ENCODE measurements at regions of chr9 and their contacts with region 1.

Region 1: GRCh38 chr9:136539427-136540421 is 6.1 kb downstream of the NOTCH1 start:
- DNase-seq: no peak
- H3K4me3 ChIP-seq: no peak overlapping the region
- H3K27ac ChIP-seq: no peak overlapping the region
- H3K4me1 ChIP-seq: peaks cover 0 to 15% (median 6%) of the 10 kb centered on the region in 4 experiments; a peak in 4 of 7 replicates
- H3K27me3 ChIP-seq: no peaks in the 10 kb centered on the region
- CTCF ChIP-seq: no peak
- EP300 ChIP-seq: no peak
- POLR2A ChIP-seq: no peak
- RAD21 ChIP-seq: no peak

Region 2: GRCh38 chr9:136245219-136246150 is 294.2 kb before region 1 on chr9 and contains the start of gene QSOX2:
- CTCF ChIA-PET with region 1: no interaction called
- POLR2A ChIA-PET with region 1: no interaction called
- DNase-seq: peak; percentile 43 to 85
- H3K4me3 ChIP-seq: peak within 1 kb of the TSS; percentile 81 to 96 (median 87)
- H3K27ac ChIP-seq: 0 out of 2 replicates have a peak within 1 kb of the TSS, but pooled peaks have one; percentile 12
- H3K4me1 ChIP-seq: peaks cover 3 to 21% (median 13%) of the 10 kb centered on the region in 4 experiments
- H3K27me3 ChIP-seq: peaks cover 0 to 7% (median 1%) of the 10 kb centered on the region in 4 experiments; a peak in 4 of 7 replicates
- CTCF ChIP-seq: no peak
- EP300 ChIP-seq: no peak
- POLR2A ChIP-seq: peak in 1 of 2 experiments; percentile 41; a peak in 1 of 3 replicates
- RAD21 ChIP-seq: no peak
- total RNA-seq, gene QSOX2: 27.5 and 28.6 TPM in 2 replicates

Region 3: GRCh38 chr9:136488247-136489214 is 51.2 kb before region 1 on chr9:
- CTCF ChIA-PET with region 1: interaction called, 14 read pairs
- POLR2A ChIA-PET with region 1: no interaction called
- DNase-seq: peak; percentile 23 to 94
- H3K4me3 ChIP-seq: no peak overlapping the region
- H3K27ac ChIP-seq: no peak overlapping the region
- H3K4me1 ChIP-seq: peaks cover 0 to 7% (median 2%) of the 10 kb centered on the region in 4 experiments; a peak in 5 of 7 replicates
- H3K27me3 ChIP-seq: no peaks in the 10 kb centered on the region
- CTCF ChIP-seq: peak in 2 of 3 experiments; percentile 94 to 95; a peak in 3 of 4 replicates
- EP300 ChIP-seq: no peak
- POLR2A ChIP-seq: no peak
- RAD21 ChIP-seq: peak; percentile 94 to 95

Region 4: GRCh38 chr9:136527721-136528691 is 11.7 kb before region 1 on chr9:
- CTCF ChIA-PET with region 1: interaction called, 21 read pairs
- POLR2A ChIA-PET with region 1: interaction called, 4 read pairs
- DNase-seq: no peak
- H3K4me3 ChIP-seq: no peak overlapping the region
- H3K27ac ChIP-seq: no peak overlapping the region
- H3K4me1 ChIP-seq: peaks cover 0 to 24% (median 14%) of the 10 kb centered on the region in 4 experiments; a peak in 5 of 7 replicates
- H3K27me3 ChIP-seq: no peaks in the 10 kb centered on the region
- CTCF ChIP-seq: no peak
- EP300 ChIP-seq: no peak
- POLR2A ChIP-seq: no peak
- RAD21 ChIP-seq: no peak

Region 5: DNA sequence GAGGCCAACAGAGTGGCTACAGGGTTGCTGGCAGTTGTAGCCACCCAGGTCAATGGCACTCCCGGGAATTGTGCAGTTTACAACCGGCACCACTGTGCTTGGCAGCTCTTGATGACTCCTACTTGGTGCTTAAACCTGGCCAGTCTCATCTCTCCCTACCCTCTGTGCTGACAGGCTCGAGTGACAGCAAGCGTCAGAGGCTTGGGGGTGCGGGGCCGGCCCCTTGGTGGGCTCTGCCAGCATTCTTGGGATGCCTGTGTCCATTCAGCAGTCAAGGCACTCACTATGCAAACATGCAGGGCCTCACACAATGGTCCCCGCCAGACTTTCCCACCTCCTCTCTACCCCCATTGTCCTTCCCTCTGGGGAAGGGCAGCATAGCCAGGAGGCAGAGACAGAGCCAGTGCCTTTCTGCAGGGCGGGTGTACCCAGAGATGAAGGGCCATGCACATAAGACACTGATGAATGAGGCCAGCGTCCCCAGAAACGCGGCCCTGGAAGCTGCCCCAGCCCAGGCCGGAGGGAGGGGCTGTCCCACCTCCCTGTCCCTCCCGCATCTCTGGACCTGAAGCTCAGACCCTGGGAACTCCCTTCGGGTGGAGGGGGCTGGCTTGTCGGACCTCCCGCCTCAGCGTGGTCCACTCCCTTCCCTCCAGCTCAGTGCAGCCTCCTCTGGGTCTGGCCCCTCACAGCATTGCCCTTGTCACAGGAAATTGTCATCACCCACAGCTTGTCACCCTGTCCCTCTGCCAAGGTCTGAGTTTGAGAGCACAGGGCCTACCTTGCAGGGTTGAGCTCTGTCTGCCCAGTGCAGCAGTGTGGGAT is 32.5 kb after region 1 on chr9:
- CTCF ChIA-PET with region 1: interaction called, 15 read pairs
- POLR2A ChIA-PET with region 1: interaction called, 7 read pairs
- DNase-seq: peak; percentile 88 to 93
- H3K4me3 ChIP-seq: peak overlapping the region in 3 of 4 experiments; percentile 4 to 29 (median 10); a peak in 4 of 8 replicates
- H3K27ac ChIP-seq: peak overlapping the region; percentile 83
- H3K4me1 ChIP-seq: peaks cover 5 to 52% (median 39%) of the 10 kb centered on the region in 4 experiments
- H3K27me3 ChIP-seq: no peaks in the 10 kb centered on the region; a peak in 1 of 7 replicates
- CTCF ChIP-seq: no peak
- EP300 ChIP-seq: peak in 1 of 2 experiments; percentile 93; a peak in 1 of 3 replicates
- POLR2A ChIP-seq: peak in 1 of 2 experiments; percentile 78; a peak in 2 of 3 replicates
- RAD21 ChIP-seq: no peak; a peak in 1 of 4 replicates

Region 6: DNA sequence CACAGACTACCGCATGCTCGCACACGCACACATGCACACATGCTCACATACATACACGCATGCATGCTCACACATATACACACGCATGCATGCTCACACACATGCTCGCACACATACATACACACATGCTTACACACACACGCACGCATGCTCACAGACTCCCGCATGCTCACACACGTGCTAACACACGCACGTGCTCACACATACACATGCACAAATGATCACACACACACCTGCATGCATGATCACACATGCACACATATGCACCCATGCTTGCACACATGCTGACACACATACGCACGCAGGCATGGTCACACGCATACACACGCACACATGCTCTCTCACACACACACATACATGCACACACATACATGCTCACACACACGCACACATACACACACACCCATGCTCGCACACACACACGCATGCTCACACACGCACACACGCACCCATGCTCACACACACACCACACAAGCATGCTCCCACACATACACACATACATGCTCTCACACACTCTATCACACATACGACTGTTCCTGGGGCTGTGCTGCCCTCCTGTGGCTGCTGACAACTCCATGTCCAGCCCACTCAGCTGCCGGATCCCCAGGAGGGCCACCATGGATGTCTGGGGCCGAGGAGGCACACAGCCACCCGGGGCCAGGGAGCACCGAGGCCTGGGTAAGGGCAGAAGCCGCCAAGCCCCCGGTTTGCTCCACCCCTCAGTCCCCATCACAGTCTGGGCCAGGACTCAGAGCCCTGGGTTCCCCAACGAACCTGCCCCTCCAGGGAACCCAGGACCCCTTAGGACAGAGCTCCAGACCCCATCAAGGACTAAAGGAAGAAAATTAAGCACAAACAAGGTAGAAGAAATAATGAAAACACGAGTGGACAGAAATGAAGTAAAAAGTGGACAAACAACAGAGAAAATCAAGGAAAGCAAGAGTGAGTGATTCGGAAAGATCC is 91.6 kb after region 1 on chr9:
- CTCF ChIA-PET with region 1: interaction called, 72 read pairs
- POLR2A ChIA-PET with region 1: interaction called, 3 read pairs
- DNase-seq: peak; percentile 27 to 86
- H3K4me3 ChIP-seq: no peak overlapping the region
- H3K27ac ChIP-seq: no peak overlapping the region; the same call in 1 of the 2 replicates
- H3K4me1 ChIP-seq: peaks cover 0 to 9% (median 0%) of the 10 kb centered on the region in 4 experiments; a peak in 3 of 7 replicates
- H3K27me3 ChIP-seq: no peaks in the 10 kb centered on the region
- CTCF ChIP-seq: peak in 2 of 3 experiments; percentile 86 to 87; a peak in 3 of 4 replicates
- EP300 ChIP-seq: no peak
- POLR2A ChIP-seq: no peak
- RAD21 ChIP-seq: peak; percentile 94 to 95

Measured in H1 (cell line).